Activated CD8-positive, alpha-beta T cell treated with anti-CD3 and anti-CD28 coated beads, Interleukin-2, amount 10 ng/mL, durations not matched to agents 7 days and 5 days (primary cell): ENCODE measurements at regions of chr3 and their contacts with region 1.

Region 1: GRCh38 chr3:49839193-49839809 is 17.1 kb downstream of the TRAIP start:
- DNase-seq: peak; percentile 88
- ATAC-seq: peak; percentile 90
- H3K4me3 Mint-ChIP-seq: no peak overlapping the region
- H3K27ac Mint-ChIP-seq: peak overlapping the region; percentile 30
- H3K4me1 Mint-ChIP-seq: peaks cover 1% of the 10 kb centered on the region
- H3K27me3 Mint-ChIP-seq: no peaks in the 10 kb centered on the region

Region 2: GRCh38 chr3:49703443-49703927 is 135.8 kb before region 1 on chr3:
- CTCF ChIA-PET with region 1: interaction called, 11 read pairs
- POLR2A ChIA-PET with region 1: no interaction called
- DNase-seq: peak; percentile 79
- ATAC-seq: peak; percentile 96
- H3K4me3 Mint-ChIP-seq: no peak overlapping the region
- H3K27ac Mint-ChIP-seq: no peak overlapping the region
- H3K4me1 Mint-ChIP-seq: no peaks in the 10 kb centered on the region
- H3K27me3 Mint-ChIP-seq: no peaks in the 10 kb centered on the region

Region 3: DNA sequence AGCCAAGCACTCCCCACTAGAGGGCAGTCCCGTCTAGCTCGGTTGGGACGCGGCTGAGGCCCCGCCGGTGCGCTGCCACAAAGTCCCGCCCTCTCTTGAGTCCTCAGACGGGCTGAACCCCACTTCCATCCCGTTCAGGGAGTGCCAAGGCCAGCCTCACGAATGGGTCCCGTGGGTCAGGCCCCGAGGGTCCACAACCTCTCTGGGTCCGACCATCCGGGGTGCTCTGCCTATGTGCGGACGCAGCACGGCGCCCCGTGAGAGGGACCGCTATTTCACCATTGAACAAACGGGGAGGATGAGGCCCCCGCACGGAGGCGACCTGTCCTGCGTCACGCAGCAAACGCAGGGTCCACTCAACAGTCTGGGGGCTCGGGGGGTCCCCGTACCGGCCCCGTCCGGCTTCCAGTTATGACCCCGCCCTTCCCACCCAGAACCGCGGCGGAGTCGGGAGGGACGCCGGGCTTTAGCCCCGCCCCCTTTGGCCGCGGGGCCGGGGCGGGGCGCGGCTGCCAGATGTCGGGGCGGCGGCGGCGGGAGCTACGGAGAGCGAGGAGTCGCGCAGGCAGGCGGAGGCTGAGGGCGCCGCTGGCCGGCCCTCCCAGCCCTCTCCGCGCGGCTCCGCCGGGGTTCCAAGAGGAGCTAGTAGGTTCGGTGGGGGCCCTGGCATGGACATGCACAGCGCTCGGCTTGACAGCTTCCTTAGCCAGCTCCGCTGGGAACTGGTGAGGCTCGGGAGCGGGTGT is 36.4 kb before region 1 on chr3 and contains the start of gene INKA1:
- CTCF ChIA-PET with region 1: interaction called, 305 read pairs
- POLR2A ChIA-PET with region 1: interaction called, 3 read pairs
- DNase-seq: peak; percentile 93
- ATAC-seq: peak; percentile 87
- H3K4me3 Mint-ChIP-seq: peak within 1 kb of the TSS; percentile 83
- H3K27ac Mint-ChIP-seq: peak within 1 kb of the TSS; percentile 83
- H3K4me1 Mint-ChIP-seq: peaks cover 46% of the 10 kb centered on the region
- H3K27me3 Mint-ChIP-seq: peaks cover 16% of the 10 kb centered on the region
- total RNA-seq, gene INKA1: 1.3 to 2.2 TPM

Region 4: GRCh38 chr3:49856181-49857005 is 17.1 kb after region 1 on chr3 and contains the start of gene TRAIP:
- CTCF ChIA-PET with region 1: interaction called, 42 read pairs
- POLR2A ChIA-PET with region 1: interaction called, 6 read pairs
- DNase-seq: peak; percentile 96
- ATAC-seq: peak; percentile 98
- H3K4me3 Mint-ChIP-seq: peak within 1 kb of the TSS; percentile 99
- H3K27ac Mint-ChIP-seq: peak within 1 kb of the TSS; percentile 95
- H3K4me1 Mint-ChIP-seq: peaks cover 21% of the 10 kb centered on the region
- H3K27me3 Mint-ChIP-seq: no peaks in the 10 kb centered on the region
- total RNA-seq, gene TRAIP: 32.0 to 32.9 TPM

Region 5: GRCh38 chr3:49906004-49906743 is 66.9 kb after region 1 on chr3:
- CTCF ChIA-PET with region 1: interaction called, 15 read pairs
- POLR2A ChIA-PET with region 1: no interaction called
- DNase-seq: peak; percentile 69
- ATAC-seq: peak; percentile 52
- H3K4me3 Mint-ChIP-seq: peak overlapping the region; percentile 50
- H3K27ac Mint-ChIP-seq: peak overlapping the region; percentile 93
- H3K4me1 Mint-ChIP-seq: peaks cover 39% of the 10 kb centered on the region
- H3K27me3 Mint-ChIP-seq: no peaks in the 10 kb centered on the region

Region 6: DNA sequence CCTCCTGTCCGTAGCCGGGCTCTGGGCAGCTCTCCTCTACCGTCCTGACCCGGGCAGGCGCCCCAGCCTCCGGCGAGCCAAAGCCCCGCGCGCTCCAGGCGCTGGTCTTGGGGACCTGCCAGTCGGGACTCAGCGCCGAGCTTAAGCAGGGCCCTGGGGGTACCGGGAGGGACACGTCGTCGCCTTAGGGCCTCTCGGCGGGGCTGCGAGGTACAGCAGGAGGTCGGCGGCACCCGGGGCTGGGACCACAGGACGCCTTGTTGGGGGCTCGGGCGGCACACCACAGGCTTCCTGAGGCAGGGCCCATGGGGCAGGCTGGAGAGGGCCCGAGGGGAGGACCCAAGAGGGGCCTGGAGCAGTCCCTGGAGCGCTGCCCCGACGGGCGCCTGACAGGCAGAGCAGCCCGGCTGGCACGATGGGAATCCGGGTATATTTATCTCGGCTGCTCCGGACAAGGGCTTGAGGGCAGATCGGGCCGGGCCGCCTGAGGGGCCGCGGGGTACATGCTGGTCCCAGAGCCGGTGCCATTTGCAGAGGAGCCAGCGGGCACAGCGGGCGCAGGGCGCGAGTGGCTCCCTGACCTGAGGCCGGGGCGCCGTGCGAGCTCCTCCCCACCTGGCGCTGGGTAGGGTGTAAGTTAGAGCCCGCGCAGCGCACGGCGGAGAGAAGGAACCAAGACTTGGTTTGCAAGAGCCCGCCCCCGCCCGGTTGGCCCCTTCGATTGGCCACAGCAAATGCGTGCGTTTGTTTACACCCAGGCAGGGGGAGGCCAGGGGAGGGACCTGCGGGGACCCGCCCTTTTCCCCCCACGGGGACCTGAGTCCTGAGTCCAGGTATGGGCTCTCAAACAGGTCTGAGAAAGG is 366.3 kb after region 1 on chr3:
- CTCF ChIA-PET with region 1: no interaction called
- POLR2A ChIA-PET with region 1: no interaction called
- DNase-seq: peak; percentile 48
- ATAC-seq: peak; percentile 64
- H3K4me3 Mint-ChIP-seq: no peak overlapping the region
- H3K27ac Mint-ChIP-seq: no peak overlapping the region
- H3K4me1 Mint-ChIP-seq: no peaks in the 10 kb centered on the region
- H3K27me3 Mint-ChIP-seq: peaks cover 44% of the 10 kb centered on the region